GM10248 (cell line): ENCODE measurements at regions of chr1 and their contacts with region 1.

Region 1: GRCh38 chr1:153946622-153947241 is at the start of gene DENND4B:
- DNase-seq: peak; percentile 91
- CTCF ChIP-seq: peak; percentile 96

Region 2: DNA sequence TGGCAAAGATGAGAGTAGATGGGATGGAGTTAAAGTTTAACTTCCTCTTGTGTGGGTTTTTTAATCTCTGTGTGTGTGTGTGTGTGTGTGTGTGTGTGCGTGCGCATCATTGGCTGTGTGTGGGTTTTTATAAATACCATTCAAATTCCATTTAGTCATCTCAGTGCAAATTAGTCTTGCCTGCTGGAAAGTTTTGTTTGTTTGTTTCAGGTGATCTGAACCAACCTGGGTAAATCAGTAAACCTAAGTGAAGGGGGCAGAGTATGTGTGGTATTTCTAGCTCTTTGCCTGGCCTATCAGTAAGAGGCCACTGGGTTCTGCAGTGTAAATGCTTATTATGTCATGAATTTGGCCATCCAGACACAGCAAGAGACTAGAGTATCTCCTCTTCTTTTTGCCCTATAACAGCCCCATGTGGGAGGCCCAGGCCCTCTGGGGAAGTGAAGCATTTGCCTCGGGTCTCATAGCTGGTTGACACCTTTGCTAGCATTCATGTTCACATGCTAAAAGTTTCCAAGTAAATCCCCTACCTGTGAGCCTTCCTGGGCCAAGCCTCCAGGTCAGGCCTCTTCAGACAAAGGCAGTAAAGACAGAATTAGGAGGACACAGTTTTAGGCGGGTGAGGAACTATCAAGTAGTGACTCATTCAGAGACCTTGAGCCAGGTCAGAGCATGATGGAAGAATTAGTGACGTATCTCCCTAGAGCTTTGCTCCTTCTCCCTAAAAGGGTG is 204.2 kb before region 1 on chr1:
- CTCF ChIA-PET with region 1: no interaction called
- POLR2A ChIA-PET with region 1: no interaction called
- DNase-seq: peak; percentile 53
- CTCF ChIP-seq: no peak

Region 3: GRCh38 chr1:153796791-153797659 is 149.7 kb before region 1 on chr1:
- CTCF ChIA-PET with region 1: interaction called, 35 read pairs
- POLR2A ChIA-PET with region 1: no interaction called
- DNase-seq: peak; percentile 86
- CTCF ChIP-seq: peak; percentile 78

Region 4: DNA sequence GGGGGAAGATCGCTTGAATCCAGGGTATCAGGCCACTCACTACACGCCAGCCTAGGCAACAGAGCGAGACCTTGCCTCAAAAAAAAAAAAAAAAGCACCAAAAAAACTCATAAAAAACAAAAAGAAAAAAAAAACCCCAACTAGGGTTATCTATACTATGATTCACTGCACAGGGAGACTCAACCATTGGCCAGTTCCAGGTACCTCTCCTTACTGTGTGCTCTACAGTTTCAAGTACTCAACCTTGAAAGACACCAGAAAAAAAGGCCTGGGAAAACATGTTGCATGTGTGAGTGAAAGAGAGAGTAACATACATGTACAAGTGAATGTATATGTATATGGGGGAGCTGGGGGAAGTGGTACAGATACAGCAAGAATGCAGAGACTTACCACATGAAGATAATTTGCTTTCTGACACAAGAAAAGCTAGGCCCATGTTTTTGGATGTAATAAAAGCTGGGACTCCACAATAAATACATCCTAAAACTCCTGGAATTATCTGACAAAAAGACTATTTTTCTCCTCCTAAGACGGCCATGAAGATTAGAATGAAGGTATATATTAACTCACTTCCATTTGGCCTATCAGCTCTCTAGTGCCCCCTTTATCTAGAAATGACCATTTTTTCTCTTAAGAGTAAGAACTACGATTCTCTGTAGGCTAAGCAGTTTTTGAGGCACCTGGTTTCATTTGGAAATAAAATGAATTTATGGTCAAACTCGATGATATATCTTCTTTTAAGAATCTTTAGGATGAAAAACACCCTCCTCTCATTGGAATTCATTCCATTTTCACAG is 119.4 kb before region 1 on chr1:
- CTCF ChIA-PET with region 1: interaction called, 11 read pairs
- POLR2A ChIA-PET with region 1: no interaction called
- DNase-seq: no peak
- CTCF ChIP-seq: no peak

Region 5: DNA sequence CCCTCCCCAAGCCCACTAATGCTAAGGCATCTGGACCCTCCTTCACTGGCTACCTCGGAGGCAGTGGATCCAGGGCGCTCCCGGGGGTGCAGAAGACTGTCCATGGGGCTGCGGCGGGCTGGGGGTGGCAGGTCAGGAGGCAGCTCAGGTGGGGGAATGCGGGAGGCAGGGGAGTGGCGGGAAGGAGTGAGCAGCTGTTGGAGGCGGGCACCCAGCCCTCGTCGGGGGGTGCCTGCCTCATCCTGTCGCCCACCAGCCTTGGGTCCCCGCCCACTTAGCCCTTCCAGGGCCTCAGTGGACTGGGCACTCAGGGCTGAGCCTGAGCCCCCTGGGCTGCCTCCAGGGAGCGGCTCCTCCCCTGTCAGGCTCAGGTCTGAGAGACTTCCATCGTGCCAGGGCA is 13.3 kb before region 1 on chr1:
- CTCF ChIA-PET with region 1: interaction called, 108 read pairs
- POLR2A ChIA-PET with region 1: interaction called, 3 read pairs
- DNase-seq: no peak
- CTCF ChIP-seq: no peak

Region 6: GRCh38 chr1:153967082-153968000 is 20.6 kb after region 1 on chr1 and contains the start of gene CREB3L4:
- CTCF ChIA-PET with region 1: interaction called, 23 read pairs
- POLR2A ChIA-PET with region 1: interaction called, 7 read pairs
- DNase-seq: peak; percentile 91
- CTCF ChIP-seq: peak; percentile 59